MCF 10A (cell line): ENCODE measurements at regions of chr1 and their contacts with region 1.

Region 1: DNA sequence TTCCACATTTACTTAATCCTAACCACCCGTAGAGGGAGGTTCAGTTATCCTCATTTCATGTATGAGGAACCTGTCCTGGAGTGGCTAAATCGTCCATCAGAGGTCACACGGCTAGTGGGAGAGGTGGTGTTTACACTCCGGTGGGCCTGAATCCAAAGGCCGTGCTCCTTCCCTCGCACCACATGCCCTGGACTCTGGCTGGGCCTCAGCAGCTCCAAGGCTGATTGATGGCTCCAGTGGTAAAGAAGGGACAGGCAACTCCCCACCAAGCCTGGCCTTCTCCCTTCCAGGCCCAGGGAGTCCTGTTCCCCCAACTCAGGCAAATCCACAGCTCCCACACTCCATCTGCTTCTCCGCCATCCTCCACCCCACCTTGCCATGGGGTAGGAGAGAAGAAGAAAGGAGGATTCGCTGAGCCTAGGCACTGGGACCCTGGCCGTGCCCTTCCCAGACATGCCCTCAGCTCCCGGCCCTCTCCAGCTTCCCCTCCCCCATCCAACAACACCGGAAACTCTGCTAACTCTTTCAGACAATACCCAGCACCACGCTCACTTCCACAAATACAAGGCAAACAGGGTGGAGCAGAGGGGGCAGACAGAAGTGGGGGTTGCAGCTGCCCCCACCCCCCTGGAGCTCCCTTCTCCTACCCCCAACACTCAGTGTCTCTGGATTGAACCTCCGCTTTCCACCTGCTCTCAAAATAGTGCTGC is 10.9 kb downstream of the ARHGEF2 start:
- DNase-seq: no peak
- H3K4me3 Mint-ChIP-seq: no peak overlapping the region
- H3K27ac Mint-ChIP-seq: peak overlapping the region; percentile 76
- H3K4me1 Mint-ChIP-seq: peaks cover 41% of the 10 kb centered on the region
- H3K27me3 Mint-ChIP-seq: no peaks in the 10 kb centered on the region
- CTCF ChIP-seq: no peak

Region 2: GRCh38 chr1:155978325-155978972 is 11.0 kb after region 1 on chr1 and contains the start of gene ARHGEF2:
- CTCF ChIA-PET with region 1: interaction called, 73 read pairs
- POLR2A ChIA-PET with region 1: interaction called, 259 read pairs
- intact Hi-C with region 1: loop called (anchors 1 kb)
- DNase-seq: peak; percentile 89
- H3K4me3 Mint-ChIP-seq: peak within 1 kb of the TSS; percentile 81
- H3K27ac Mint-ChIP-seq: peak within 1 kb of the TSS; percentile 90
- H3K4me1 Mint-ChIP-seq: peaks cover 83% of the 10 kb centered on the region
- H3K27me3 Mint-ChIP-seq: no peaks in the 10 kb centered on the region
- CTCF ChIP-seq: no peak
- total RNA-seq, gene ARHGEF2: 498 and 555 TPM in 2 replicates